ENCODE measurements at regions of chr18 and their contacts with region 1.

Region 1: DNA sequence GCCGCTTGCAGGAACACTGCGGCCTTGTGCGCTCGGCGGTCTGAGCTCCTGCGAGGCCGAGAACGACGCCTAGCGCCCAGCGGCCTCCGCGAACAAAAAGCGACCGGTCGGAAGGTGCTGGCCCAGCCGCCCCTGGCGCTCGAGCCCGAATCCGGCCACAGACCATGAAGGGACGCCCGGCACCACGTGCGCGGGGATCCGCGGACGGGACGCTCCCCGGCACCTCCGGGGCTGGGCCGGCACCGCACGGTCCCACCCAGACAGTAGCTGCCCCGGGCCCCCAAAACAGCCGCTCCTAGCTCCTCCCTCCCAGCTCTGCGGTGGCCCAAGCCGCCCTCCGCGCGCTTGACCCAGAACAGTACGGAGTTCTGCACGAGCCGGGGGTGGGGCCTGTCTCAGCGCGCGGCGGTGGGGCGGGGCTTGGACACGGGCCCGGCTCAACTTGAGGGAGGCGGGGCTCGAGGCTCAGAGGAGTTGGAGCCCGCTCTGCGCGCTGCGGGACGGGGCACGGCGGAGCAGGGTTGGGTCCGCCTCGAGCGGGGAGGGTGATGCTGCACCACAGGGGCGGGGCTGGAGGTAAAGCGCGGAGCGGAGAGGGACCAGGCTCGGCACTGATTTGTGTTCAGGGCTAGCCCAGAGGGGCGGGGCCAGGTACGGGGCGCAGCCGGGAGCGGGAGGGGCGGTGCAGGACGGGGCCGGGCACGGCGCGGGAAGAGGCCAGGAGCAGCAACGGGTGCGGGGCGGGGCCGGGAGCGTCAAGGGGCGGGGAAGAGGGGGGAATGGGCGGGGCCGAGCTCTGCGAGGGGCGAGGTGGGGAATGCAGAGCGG is 538 bp upstream of the IMPA2 start:
- DNase-seq: peak; percentile 99
- H3K4me3 ChIP-seq: peak overlapping the region; percentile 61 to 74 (median 63)
- H3K27ac ChIP-seq: peak overlapping the region; percentile 81
- H3K4me1 ChIP-seq: peaks cover 11% of the 10 kb centered on the region
- H3K27me3 ChIP-seq: no peaks in the 10 kb centered on the region
- CTCF ChIP-seq: no peak

Region 2: DNA sequence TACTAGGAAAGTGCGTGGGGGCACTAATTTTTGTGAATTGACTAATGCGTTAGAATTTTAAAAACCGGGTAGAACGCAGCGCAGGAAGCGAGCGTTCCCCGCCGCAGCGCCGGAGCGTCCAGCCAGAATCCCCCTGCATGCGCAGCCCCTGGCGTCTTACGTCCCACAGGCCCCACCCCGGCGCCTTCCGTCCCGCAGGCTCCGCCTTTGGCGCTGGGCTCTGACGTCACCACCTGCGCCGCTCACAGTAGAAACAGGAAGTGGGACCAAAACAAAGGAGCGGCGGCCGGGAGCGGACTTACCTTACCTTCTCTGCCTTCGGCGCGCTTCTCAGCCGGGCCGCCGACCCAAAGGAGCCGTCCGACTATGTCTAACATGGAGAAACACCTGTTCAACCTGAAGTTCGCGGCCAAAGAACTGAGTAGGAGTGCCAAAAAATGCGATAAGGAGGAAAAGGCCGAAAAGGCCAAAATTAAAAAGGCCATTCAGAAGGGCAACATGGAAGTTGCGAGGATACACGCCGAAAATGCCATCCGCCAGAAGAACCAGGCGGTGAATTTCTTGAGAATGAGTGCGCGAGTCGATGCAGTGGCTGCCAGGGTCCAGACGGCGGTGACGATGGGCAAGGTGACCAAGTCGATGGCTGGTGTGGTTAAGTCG is 129.5 kb before region 1 on chr18 and contains the start of gene CHMP1B:
- CTCF ChIA-PET with region 1: no interaction called
- dilution Hi-C with region 1: no loop called
- in situ Hi-C with region 1: no loop called
- intact Hi-C with region 1: loop called (anchors 1 kb)
- DNase-seq: peak; percentile 95
- H3K4me3 ChIP-seq: peak within 1 kb of the TSS; percentile 55 to 85 (median 77)
- H3K27ac ChIP-seq: peak within 1 kb of the TSS; percentile 96
- H3K4me1 ChIP-seq: peaks cover 19% of the 10 kb centered on the region
- H3K27me3 ChIP-seq: no peaks in the 10 kb centered on the region
- CTCF ChIP-seq: no peak
- total RNA-seq, gene CHMP1B: 46.7 to 76.5 TPM

Region 3: DNA sequence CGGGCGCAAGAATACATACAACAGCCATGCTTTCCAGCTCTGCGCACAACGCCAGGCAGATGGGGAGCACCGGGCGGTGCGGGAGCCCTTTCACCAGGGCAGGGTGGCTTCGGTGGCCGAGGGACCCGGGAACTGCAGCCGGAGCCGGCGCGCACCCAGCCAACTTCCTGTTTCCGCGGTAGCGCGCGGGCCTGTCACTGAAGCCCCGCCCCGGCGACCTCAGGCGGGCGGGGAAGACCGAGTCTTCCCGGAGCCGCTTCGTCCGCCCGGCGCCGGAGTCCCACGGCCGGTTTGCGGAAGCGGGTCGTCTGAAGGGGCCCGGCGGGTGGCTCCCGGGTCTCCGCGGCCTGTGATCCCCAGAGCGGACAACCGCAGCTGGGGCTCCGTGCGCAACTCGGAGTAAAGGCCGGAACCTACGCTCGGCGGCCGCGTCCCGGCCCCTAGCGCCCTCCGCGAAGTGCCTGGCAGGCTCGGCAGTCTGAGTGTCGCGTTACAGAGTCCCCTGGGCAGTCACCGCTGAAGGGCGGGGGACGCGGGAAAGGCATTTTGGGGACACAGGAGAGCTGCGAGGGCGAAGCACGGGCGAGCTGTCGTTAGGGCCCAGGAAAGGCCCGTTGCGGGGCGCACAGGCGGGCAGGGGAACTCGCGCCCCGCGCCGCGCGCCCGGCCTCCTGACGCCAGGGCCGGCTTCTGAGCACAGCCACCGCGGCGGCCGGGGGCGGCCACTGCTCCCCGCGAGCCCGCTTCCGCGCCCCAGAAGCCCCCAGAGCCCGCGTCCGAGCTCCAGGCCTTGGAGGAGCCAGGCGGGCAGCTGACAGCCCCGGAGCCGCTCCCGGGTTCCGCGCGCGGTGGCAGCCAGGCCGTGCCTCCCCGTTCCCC is 72.3 kb before region 1 on chr18 and contains the start of gene MPPE1:
- CTCF ChIA-PET with region 1: no interaction called
- dilution Hi-C with region 1: no loop called
- in situ Hi-C with region 1: no loop called
- intact Hi-C with region 1: loop called (anchors 2 kb)
- DNase-seq: peak; percentile 82
- H3K4me3 ChIP-seq: peak within 1 kb of the TSS; percentile 71 to 92 (median 85)
- H3K27ac ChIP-seq: peak within 1 kb of the TSS; percentile 90
- H3K4me1 ChIP-seq: peaks cover 6% of the 10 kb centered on the region
- H3K27me3 ChIP-seq: no peaks in the 10 kb centered on the region
- CTCF ChIP-seq: no peak
- total RNA-seq, gene MPPE1: 27.2 to 33.6 TPM

Region 4: DNA sequence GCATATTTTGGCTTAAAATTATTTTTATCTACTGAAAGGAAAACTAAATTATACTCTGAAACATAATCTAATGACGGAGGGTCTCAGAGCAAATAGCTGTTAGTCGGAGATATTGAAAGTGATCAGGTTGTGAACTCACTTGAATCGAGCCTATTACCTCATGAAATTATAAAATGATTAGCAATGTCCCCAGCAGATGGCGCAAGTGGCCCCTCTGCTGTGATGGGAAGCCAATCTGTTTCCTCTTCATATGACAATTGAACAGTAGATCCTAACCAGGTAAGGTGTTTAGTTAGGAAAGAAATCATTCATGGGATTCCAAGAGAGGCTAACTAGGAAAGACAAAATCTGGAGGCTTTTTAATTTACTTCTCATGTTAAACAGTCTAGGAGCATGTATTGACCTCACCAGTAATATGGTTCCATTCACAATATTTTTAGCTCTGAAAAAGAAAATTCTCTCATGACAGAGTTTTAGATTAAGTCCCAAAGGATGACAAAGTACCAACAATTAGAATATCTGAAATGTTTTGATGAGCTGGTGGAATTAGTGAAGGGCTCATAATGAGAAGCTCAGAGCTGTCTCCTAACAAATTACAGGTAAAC is 42.8 kb before region 1 on chr18:
- CTCF ChIA-PET with region 1: interaction called, 4 read pairs
- dilution Hi-C with region 1: no loop called
- in situ Hi-C with region 1: loop called in 1 of 2 experiments (anchors 5 kb)
- intact Hi-C with region 1: no loop called
- DNase-seq: peak; percentile 47
- H3K4me3 ChIP-seq: no peak overlapping the region
- H3K27ac ChIP-seq: no peak overlapping the region
- H3K4me1 ChIP-seq: no peaks in the 10 kb centered on the region
- H3K27me3 ChIP-seq: no peaks in the 10 kb centered on the region
- CTCF ChIP-seq: peak; percentile 70 to 83

Region 5: DNA sequence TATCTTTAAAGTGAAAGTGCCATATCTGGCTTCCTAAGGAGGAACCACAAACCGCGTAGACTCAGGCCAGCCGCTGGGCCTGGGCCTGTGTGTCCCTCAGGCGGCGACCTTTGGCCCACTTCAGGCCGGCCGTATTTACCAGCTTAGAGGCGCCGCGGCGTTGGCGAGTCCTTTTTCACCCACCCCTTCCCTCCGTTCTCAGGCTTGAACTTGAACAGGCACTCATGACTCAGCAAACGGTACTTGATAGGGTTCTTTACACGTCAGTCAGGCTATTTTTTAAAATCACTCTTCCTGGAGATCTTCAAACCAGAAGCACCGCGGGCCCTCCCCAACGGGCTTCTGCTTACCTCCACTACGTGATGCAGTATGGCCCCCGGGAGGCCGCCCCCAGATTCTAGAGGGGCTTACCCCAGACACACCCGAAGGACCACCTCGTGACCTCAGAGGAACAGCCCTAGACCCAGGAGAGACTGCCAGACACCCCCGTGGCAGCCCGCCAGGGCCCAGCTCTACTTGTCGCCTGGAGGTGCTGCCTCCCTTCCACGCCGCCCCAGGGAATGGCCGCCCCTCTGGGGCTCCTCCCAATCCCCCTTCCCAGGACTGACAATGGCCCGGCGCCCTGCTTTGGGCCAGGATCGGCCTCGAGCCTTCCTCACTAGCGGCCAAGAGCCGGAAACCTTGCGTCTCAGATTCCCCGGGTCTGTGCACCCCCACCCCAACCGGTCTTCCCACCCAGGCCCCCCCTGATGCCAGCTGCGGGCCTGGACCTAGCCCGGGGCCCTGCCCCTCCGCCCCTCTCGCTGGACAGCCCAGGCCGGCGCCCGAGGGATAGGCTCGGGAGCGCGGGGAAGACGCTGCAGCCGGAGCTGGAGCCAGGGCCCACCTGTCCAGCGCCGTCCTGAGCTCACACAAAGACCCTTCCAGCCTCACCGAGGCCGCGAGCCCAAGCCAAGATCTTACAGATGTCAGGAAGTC is 33.3 kb before region 1 on chr18:
- CTCF ChIA-PET with region 1: interaction called, 4 read pairs
- dilution Hi-C with region 1: no loop called
- in situ Hi-C with region 1: no loop called
- intact Hi-C with region 1: loop called (anchors 1 kb)
- DNase-seq: peak; percentile 95
- H3K4me3 ChIP-seq: no peak overlapping the region
- H3K27ac ChIP-seq: peak overlapping the region; percentile 57
- H3K4me1 ChIP-seq: peaks cover 17% of the 10 kb centered on the region
- H3K27me3 ChIP-seq: no peaks in the 10 kb centered on the region
- CTCF ChIP-seq: no peak

Region 6: DNA sequence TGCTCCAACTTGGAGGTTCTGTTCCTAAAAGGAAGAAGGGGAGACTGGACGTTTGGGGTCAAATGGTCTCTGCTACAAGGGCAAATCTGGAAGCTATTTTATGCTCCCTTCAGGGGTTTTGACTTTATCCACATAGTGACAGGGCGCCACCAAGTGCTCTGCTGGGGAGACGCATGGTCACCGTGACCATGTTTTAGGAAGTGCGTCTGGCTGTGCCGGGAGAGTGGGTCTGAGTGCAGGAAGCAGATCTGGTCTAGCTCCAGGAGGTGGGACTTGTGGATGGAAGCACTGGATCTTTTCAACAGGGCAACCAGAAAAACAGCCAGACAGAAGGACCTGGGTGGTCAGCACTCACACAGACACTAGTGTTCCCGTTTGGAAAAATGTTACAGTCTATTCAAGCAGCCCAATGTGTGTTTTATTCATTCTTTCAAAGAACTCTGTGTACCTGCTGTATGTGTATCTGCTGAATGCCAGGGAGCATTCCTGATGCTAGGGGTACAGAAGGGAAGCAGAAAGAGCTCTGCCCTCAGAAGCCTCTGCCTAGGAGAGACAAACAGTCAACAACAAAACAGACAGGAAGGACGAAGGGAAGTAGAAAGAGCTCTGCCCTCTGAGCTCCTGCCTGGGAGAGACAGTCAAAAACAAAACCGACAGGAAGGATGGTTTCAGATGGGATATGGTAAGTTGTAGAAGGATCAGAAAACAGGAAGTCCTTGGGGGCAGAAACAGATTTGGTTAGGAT is 14.8 kb after region 1 on chr18:
- CTCF ChIA-PET with region 1: no interaction called
- dilution Hi-C with region 1: no loop called
- in situ Hi-C with region 1: no loop called
- intact Hi-C with region 1: no loop called
- DNase-seq: peak; percentile 54
- H3K4me3 ChIP-seq: no peak overlapping the region
- H3K27ac ChIP-seq: no peak overlapping the region
- H3K4me1 ChIP-seq: peaks cover 14% of the 10 kb centered on the region
- H3K27me3 ChIP-seq: no peaks in the 10 kb centered on the region
- CTCF ChIP-seq: peak; percentile 66 to 79

Region 7: GRCh38 chr18:12015416-12016062 is 34.8 kb after region 1 on chr18:
- CTCF ChIA-PET with region 1: interaction called, 3 read pairs
- dilution Hi-C with region 1: no loop called
- in situ Hi-C with region 1: no loop called
- intact Hi-C with region 1: loop called (anchors 1 kb)
- DNase-seq: peak; percentile 80
- H3K4me3 ChIP-seq: no peak overlapping the region
- H3K27ac ChIP-seq: no peak overlapping the region
- H3K4me1 ChIP-seq: peaks cover 21% of the 10 kb centered on the region
- H3K27me3 ChIP-seq: no peaks in the 10 kb centered on the region
- CTCF ChIP-seq: no peak

Region 8: DNA sequence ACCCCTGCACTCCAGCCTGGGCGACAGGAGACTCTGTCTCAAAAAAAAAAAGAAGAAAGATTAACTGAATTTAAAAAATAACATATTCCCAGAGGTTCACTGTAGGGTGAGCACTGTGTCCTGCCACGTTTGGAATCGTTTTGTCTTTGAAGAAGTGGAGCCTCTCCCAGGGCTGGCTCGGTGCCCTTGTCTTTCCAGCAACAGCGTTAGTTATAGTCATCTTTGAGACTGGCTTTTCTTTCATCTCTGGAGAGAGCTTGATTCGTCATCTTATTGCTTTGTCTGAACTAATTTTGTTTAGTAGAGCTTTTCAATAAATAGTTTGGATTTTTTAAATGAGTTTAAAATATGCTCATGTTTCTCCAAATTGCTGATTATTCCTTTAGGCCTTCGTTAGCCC is 51.1 kb after region 1 on chr18:
- CTCF ChIA-PET with region 1: no interaction called
- dilution Hi-C with region 1: loop called (anchors 5 kb)
- in situ Hi-C with region 1: no loop called
- intact Hi-C with region 1: no loop called
- DNase-seq: no peak
- H3K4me3 ChIP-seq: no peak overlapping the region
- H3K27ac ChIP-seq: no peak overlapping the region
- H3K4me1 ChIP-seq: peaks cover 13% of the 10 kb centered on the region
- H3K27me3 ChIP-seq: no peaks in the 10 kb centered on the region
- CTCF ChIP-seq: no peak